Right ventricle myocardium superior (tissue), 1 donor: ENCODE measurements at regions of chr21 and their contacts with region 1.

Region 1: DNA sequence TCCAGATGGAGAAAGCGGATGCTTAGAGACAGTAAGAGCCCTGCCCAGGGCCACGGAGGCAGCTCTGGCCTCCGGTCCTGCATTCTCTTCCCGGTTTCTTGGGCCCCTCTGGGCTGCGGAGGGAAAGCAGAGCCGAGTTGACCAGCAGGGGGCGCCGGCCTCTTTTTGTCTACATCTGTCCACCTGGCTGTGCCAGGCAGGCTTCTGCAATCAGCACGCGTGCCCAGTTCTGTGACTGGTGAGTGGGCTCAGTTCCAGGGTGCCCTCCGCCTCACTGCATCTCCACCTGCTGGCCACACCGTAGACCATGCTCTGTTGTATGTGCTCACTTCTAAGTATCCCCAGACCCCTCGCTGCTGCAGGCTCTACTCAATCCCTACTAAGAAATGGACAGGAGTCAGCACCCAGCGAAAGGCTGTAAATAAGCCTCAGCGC is 6.7 kb upstream of the HUNK start:
- DNase-seq: peak; percentile 93
- ATAC-seq: peak; percentile 99

Region 2: DNA sequence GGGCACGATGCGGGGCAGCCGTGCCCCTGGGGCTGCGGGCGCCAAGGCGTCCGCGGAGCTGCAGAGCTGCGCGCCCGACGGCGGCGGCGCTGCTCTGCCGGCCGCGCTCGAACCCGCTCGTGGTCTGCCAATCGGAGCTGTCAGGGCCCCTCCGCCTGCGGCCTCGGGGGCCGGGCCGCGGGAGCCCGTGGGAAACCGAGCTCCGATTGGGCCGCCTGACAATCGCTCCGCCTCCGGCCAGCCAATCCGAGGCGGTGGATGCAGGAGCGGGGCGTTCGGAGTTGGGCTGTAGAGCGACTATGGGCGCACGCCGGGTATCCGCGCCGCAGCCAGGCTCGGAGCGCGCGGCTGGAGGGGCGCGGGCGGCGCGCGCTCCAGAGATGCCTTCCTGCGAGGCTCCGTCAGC is 307.1 kb before region 1 on chr21:
- intact Hi-C with region 1: no loop called
- DNase-seq: peak; percentile 90
- ATAC-seq: peak; percentile 99

Region 3: GRCh38 chr21:31798842-31799704 is 67.0 kb before region 1 on chr21:
- intact Hi-C with region 1: loop called (anchors 5 kb)
- DNase-seq: no peak
- ATAC-seq: no peak

Region 4: GRCh38 chr21:32257962-32258785 is 392.1 kb after region 1 on chr21:
- intact Hi-C with region 1: loop called (anchors 2 kb)
- DNase-seq: peak; percentile 57
- ATAC-seq: peak; percentile 90